ENCODE measurements at regions of chr4 and their contacts with region 1.

Region 1: GRCh38 chr4:104860238-104861123 is 286.2 kb upstream of the TET2 start:
- ATAC-seq: peak; percentile 76 to 88 (median 84)
- H3K4me3 ChIP-seq: no peak overlapping the region
- H3K27ac ChIP-seq: no peak overlapping the region
- H3K4me1 ChIP-seq: peaks cover 5 to 8% of the 10 kb centered on the region in 2 donors

Region 2: GRCh38 chr4:103457566-103457965 is 1402.9 kb before region 1 on chr4:
- in situ Hi-C with region 1: no loop called
- ATAC-seq: no peak
- H3K4me3 ChIP-seq: no peak overlapping the region
- H3K27ac ChIP-seq: no peak overlapping the region
- H3K4me1 ChIP-seq: no peaks in the 10 kb centered on the region

Region 3: GRCh38 chr4:104015680-104016253 is 844.7 kb before region 1 on chr4:
- in situ Hi-C with region 1: loop called in 2 of 9 experiments (anchors 25 kb)
- ATAC-seq: peak in 5 of 8 experiments; percentile 57 to 65 (median 60)
- H3K4me3 ChIP-seq: no peak overlapping the region
- H3K27ac ChIP-seq: no peak overlapping the region
- H3K4me1 ChIP-seq: no peaks in the 10 kb centered on the region

Region 4: GRCh38 chr4:104064646-104065577 is 795.6 kb before region 1 on chr4:
- in situ Hi-C with region 1: loop called in 1 of 9 experiments (anchors 25 kb)
- ATAC-seq: peak; percentile 58 to 100 (median 98)
- H3K4me3 ChIP-seq: peak overlapping the region; percentile 3 to 18 (median 14)
- H3K27ac ChIP-seq: peak overlapping the region in 1 of 2 donors; percentile 16
- H3K4me1 ChIP-seq: peaks cover 0 to 20% of the 10 kb centered on the region in 2 donors

Measured in motor neuron (in vitro differentiated cells).